MCF 10A (cell line): ENCODE measurements at regions of chrX and their contacts with region 1.

Region 1: GRCh38 chrX:94288325-94288724 is 614.3 kb downstream of the FAM133A start:
- DNase-seq: peak; percentile 12
- H3K4me3 Mint-ChIP-seq: no peak overlapping the region
- H3K27ac Mint-ChIP-seq: no peak overlapping the region
- H3K4me1 Mint-ChIP-seq: no peaks in the 10 kb centered on the region
- H3K27me3 Mint-ChIP-seq: peaks cover 26% of the 10 kb centered on the region
- CTCF ChIP-seq: peak; percentile 42

Region 2: DNA sequence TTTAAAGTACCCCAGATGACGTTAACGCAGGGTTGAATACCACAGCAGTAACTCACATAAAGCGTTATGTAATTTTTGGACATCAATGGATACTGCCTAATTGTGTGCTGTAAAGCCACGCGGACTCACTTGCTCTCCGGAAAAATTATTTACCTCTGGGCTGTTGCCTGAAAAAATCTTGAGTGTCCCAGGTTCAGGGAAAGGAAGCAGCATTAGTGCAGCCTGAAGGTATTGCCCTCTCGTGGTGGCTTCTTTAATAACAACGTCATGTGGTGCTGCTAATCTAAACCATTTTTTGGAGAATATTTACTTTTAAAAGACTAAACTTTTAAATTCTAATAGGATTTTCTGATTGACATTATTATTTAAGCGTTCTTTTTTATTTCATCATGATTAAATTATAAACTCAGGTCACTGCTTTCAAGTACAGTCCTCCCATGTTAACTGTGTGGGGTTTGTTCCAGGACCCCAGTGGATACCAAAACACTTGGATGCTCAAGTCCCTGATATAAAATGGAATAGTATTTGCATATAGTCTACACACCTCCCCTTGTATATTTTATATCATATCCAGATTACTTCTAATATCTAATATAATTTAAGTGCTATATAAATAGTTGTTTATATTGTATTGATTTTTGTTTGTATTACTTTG is 229.5 kb before region 1 on chrX:
- CTCF ChIA-PET with region 1: no interaction called
- POLR2A ChIA-PET with region 1: no interaction called
- intact Hi-C with region 1: loop called (anchors 5 kb)
- DNase-seq: peak; percentile 58
- H3K4me3 Mint-ChIP-seq: no peak overlapping the region
- H3K27ac Mint-ChIP-seq: no peak overlapping the region
- H3K4me1 Mint-ChIP-seq: peaks cover 5% of the 10 kb centered on the region
- H3K27me3 Mint-ChIP-seq: peaks cover 53% of the 10 kb centered on the region
- CTCF ChIP-seq: peak; percentile 49

Region 3: GRCh38 chrX:94107981-94108380 is 180.3 kb before region 1 on chrX:
- CTCF ChIA-PET with region 1: no interaction called
- POLR2A ChIA-PET with region 1: no interaction called
- intact Hi-C with region 1: loop called (anchors 5 kb)
- DNase-seq: no peak
- H3K4me3 Mint-ChIP-seq: no peak overlapping the region
- H3K27ac Mint-ChIP-seq: no peak overlapping the region
- H3K4me1 Mint-ChIP-seq: peaks cover under 1% of the 10 kb centered on the region
- H3K27me3 Mint-ChIP-seq: peaks cover 11% of the 10 kb centered on the region
- CTCF ChIP-seq: peak; percentile 38

Region 4: DNA sequence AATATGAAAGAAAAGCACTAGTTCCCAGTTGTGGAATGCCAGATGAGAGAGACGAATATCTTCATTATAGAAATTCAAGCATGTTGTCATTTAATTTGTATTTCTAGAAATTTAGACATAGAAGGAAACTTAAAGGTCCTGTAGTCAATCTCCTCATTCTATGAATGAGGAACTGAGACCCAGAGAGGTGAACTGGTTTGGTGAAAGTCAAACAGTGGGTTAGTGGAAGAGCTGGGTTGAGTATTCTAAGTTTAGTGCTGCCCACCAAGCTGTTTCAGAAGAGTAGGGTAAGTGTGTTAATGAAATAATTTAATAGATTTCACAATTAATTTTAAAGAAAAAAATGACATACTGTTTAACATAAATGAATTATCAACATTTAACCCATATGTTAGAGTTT is 40.9 kb after region 1 on chrX:
- CTCF ChIA-PET with region 1: no interaction called
- POLR2A ChIA-PET with region 1: no interaction called
- intact Hi-C with region 1: no loop called
- DNase-seq: no peak
- H3K4me3 Mint-ChIP-seq: no peak overlapping the region
- H3K27ac Mint-ChIP-seq: no peak overlapping the region
- H3K4me1 Mint-ChIP-seq: no peaks in the 10 kb centered on the region
- H3K27me3 Mint-ChIP-seq: peaks cover 22% of the 10 kb centered on the region
- CTCF ChIP-seq: no peak

Region 5: DNA sequence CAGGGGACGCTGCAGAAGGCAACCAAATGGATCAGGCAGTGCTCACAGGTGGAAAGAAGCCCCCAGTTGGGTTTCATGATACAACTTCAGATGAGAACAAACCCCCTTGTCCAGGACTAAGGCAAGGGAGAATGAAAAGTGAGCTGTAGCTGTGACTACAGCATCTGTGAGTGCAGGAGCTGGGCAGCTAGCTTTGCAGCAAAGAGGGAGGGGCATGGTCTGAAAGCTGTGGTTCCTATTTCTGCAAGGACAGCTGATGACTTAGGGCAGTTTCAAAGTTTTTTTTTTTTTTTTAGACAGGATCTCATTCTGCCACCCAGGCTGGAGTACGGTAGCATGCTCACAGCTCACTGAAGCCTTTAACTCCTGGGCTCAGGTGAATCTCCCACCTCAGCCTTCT is 1079.0 kb after region 1 on chrX:
- CTCF ChIA-PET with region 1: no interaction called
- POLR2A ChIA-PET with region 1: no interaction called
- intact Hi-C with region 1: no loop called
- DNase-seq: no peak
- H3K4me3 Mint-ChIP-seq: no peak overlapping the region
- H3K27ac Mint-ChIP-seq: no peak overlapping the region
- H3K4me1 Mint-ChIP-seq: no peaks in the 10 kb centered on the region
- H3K27me3 Mint-ChIP-seq: peaks cover 12% of the 10 kb centered on the region
- CTCF ChIP-seq: no peak